ENCODE measurements at regions of chr2 and their contacts with region 1.

Region 1: DNA sequence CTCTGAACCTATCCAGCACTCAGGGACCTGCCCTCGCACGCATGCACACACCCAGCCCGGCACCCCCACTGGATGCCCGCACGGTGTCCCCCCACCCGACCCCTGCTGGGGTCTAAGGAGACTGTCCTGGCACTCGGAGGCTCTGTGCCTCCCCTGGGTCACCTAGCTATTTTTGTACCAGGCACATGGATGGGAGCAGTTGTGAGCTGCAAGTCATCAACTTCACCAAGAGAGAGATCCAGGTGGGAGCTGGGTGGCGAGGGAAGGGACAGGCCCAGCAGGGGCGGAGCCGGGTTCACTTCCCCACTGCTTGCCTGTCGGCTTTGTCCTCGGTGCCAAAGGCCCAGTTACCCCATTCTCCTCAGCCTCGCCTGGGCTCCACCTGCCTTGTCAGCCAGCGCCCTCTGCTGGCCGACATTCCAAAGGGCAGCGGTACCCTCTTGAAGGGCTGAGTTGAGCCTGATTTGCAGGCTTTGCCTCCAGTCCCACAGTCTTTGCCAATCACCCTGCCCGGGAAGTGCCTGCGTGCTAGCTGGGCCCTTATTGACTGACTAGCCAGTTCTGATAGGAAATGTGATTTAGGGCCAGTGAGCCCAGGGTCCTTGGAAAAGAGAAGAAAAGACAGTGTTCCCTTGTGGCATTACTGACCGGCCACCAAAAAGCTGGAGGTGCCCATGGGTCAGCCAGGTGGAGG is 5.8 kb downstream of the NT5DC4 start:
- DNase-seq: peak; percentile 73 to 96 (median 90)
- ATAC-seq: peak; percentile 95 to 98 (median 96)
- H3K4me3 ChIP-seq: no peak overlapping the region
- H3K27ac ChIP-seq: no peak overlapping the region
- H3K4me1 ChIP-seq: no peaks in the 10 kb centered on the region
- H3K27me3 ChIP-seq: no peaks in the 10 kb centered on the region
- CTCF ChIP-seq: peak; percentile 89 to 98 (median 94)

Region 2: DNA sequence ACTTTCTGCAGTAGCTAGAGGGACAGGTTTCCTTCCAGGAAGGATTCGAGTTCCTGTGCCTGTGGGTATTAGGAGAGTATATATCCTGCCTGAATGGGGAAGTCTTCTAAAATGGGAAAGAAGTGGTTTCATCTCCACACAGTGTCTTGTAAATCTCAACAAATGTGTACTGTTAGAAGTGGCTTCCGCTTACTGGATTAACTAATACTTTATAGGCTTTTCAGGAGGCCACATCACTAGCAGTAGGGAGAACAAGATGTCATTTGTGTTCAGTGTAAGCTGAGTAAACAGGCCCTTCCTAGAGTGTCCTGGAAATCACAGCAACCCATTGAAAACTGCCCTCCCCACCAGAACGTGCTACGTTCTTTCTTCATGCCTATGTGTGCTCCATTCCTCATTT is 196.9 kb before region 1 on chr2:
- intact Hi-C with region 1: no loop called
- DNase-seq: no peak
- ATAC-seq: no peak
- H3K4me3 ChIP-seq: no peak overlapping the region
- H3K27ac ChIP-seq: no peak overlapping the region
- H3K4me1 ChIP-seq: no peaks in the 10 kb centered on the region
- H3K27me3 ChIP-seq: no peaks in the 10 kb centered on the region
- CTCF ChIP-seq: no peak

Region 3: GRCh38 chr2:112606488-112606902 is 120.1 kb before region 1 on chr2:
- intact Hi-C with region 1: loop called in 1 of 3 experiments (anchors 5 kb)
- DNase-seq: no peak
- ATAC-seq: peak in 1 of 4 donors; percentile 25
- H3K4me3 ChIP-seq: no peak overlapping the region
- H3K27ac ChIP-seq: no peak overlapping the region
- H3K4me1 ChIP-seq: no peaks in the 10 kb centered on the region
- H3K27me3 ChIP-seq: no peaks in the 10 kb centered on the region
- CTCF ChIP-seq: no peak

Measured in pancreas (tissue), 10 donors.